Activated B cell treated with CpG ODN at 0.5 μM for 24 hours (primary cell): ENCODE measurements at regions of chr9 and their contacts with region 1.

Region 1: GRCh38 chr9:128322404-128323211 is at the starts of genes COQ4 and TRUB2:
- DNase-seq: peak; percentile 86
- ATAC-seq: peak; percentile 88
- H3K4me3 Mint-ChIP-seq: peak within 1 kb of the TSS; percentile 92
- H3K27ac Mint-ChIP-seq: peak within 1 kb of the TSS; percentile 97
- H3K4me1 Mint-ChIP-seq: peaks cover 19% of the 10 kb centered on the region
- H3K27me3 Mint-ChIP-seq: no peaks in the 10 kb centered on the region
- CTCF ChIP-seq: no peak
- total RNA-seq, gene COQ4: 36.2 and 45.6 TPM in 2 replicates
- total RNA-seq, gene TRUB2: 28.0 and 32.6 TPM in 2 replicates

Region 2: GRCh38 chr9:128191406-128192046 is 131.1 kb before region 1 on chr9 and contains the start of gene CIZ1:
- CTCF ChIA-PET with region 1: no interaction called
- POLR2A ChIA-PET with region 1: no interaction called
- intact Hi-C with region 1: loop called (anchors 5 kb)
- DNase-seq: peak; percentile 85
- ATAC-seq: peak; percentile 89
- H3K4me3 Mint-ChIP-seq: peak within 1 kb of the TSS; percentile 94
- H3K27ac Mint-ChIP-seq: peak within 1 kb of the TSS; percentile 92
- H3K4me1 Mint-ChIP-seq: peaks cover 25% of the 10 kb centered on the region
- H3K27me3 Mint-ChIP-seq: no peaks in the 10 kb centered on the region
- CTCF ChIP-seq: no peak
- total RNA-seq, gene CIZ1: 142 and 160 TPM in 2 replicates

Region 3: DNA sequence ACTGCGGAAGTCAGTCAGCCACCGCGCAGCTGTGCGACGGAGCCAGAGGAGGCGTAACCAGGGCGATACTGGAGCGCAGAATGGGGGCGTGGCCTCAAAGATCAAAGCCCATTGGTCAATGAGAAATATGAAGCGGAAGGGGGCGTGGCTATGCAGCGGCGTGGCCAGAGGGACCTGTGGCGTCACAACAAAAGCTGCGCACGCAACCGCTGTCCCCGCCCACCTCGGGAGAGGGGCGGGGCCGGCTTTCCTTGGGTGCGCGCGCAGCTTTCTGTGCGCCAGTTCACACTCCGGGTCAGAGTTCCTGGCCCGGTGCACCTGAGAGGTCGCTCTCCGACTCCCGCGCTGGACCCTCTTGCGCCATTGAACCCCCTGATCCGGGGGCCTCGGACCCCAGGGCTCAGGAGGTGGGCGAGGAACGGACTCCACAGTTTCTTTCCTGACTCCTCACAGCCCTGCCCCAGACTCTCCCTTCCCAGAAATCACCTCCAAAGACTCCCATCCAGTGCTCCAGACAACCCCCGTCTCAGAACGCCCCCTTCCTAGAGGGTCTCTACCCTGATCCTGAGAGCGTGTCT is 46.5 kb before region 1 on chr9 and contains the starts of genes GOLGA2 and SWI5:
- CTCF ChIA-PET with region 1: no interaction called
- POLR2A ChIA-PET with region 1: interaction called, 3 read pairs
- intact Hi-C with region 1: loop called (anchors 1 kb)
- DNase-seq: peak; percentile 96
- ATAC-seq: peak; percentile 95
- H3K4me3 Mint-ChIP-seq: peak within 1 kb of the TSS; percentile 97
- H3K27ac Mint-ChIP-seq: peak within 1 kb of the TSS; percentile 92
- H3K4me1 Mint-ChIP-seq: peaks cover 27% of the 10 kb centered on the region
- H3K27me3 Mint-ChIP-seq: no peaks in the 10 kb centered on the region
- CTCF ChIP-seq: no peak
- total RNA-seq, gene GOLGA2: 46.0 and 53.5 TPM in 2 replicates
- total RNA-seq, gene SWI5: 7.2 and 10.4 TPM in 2 replicates

Region 4: GRCh38 chr9:128370826-128371621 is 48.4 kb after region 1 on chr9 and contains the start of gene URM1:
- CTCF ChIA-PET with region 1: no interaction called
- POLR2A ChIA-PET with region 1: interaction called, 8 read pairs
- intact Hi-C with region 1: loop called (anchors 1 kb)
- DNase-seq: peak; percentile 96
- ATAC-seq: peak; percentile 91
- H3K4me3 Mint-ChIP-seq: peak within 1 kb of the TSS; percentile 97
- H3K27ac Mint-ChIP-seq: peak within 1 kb of the TSS; percentile 94
- H3K4me1 Mint-ChIP-seq: peaks cover 31% of the 10 kb centered on the region
- H3K27me3 Mint-ChIP-seq: no peaks in the 10 kb centered on the region
- CTCF ChIP-seq: no peak
- total RNA-seq, gene URM1: 55.8 and 65.1 TPM in 2 replicates

Region 5: GRCh38 chr9:128455849-128456612 is 133.4 kb after region 1 on chr9 and contains the start of gene ODF2:
- CTCF ChIA-PET with region 1: no interaction called
- POLR2A ChIA-PET with region 1: no interaction called
- intact Hi-C with region 1: loop called (anchors 1 kb)
- DNase-seq: peak; percentile 99
- ATAC-seq: peak; percentile 88
- H3K4me3 Mint-ChIP-seq: peak within 1 kb of the TSS; percentile 88
- H3K27ac Mint-ChIP-seq: peak within 1 kb of the TSS; percentile 83
- H3K4me1 Mint-ChIP-seq: peaks cover 14% of the 10 kb centered on the region
- H3K27me3 Mint-ChIP-seq: no peaks in the 10 kb centered on the region
- CTCF ChIP-seq: no peak
- total RNA-seq, gene ODF2: 41.2 and 45.7 TPM in 2 replicates

Region 6: GRCh38 chr9:128656416-128657343 is 334.1 kb after region 1 on chr9 and contains the start of gene DYNC2I2:
- CTCF ChIA-PET with region 1: no interaction called
- POLR2A ChIA-PET with region 1: no interaction called
- intact Hi-C with region 1: loop called (anchors 1 kb)
- DNase-seq: peak; percentile 80
- ATAC-seq: peak; percentile 73
- H3K4me3 Mint-ChIP-seq: peak within 1 kb of the TSS; percentile 92
- H3K27ac Mint-ChIP-seq: peak within 1 kb of the TSS; percentile 99
- H3K4me1 Mint-ChIP-seq: peaks cover 18% of the 10 kb centered on the region
- H3K27me3 Mint-ChIP-seq: no peaks in the 10 kb centered on the region
- CTCF ChIP-seq: no peak
- total RNA-seq, gene DYNC2I2: 58.0 and 60.2 TPM in 2 replicates

Region 7: GRCh38 chr9:128786681-128787601 is 464.3 kb after region 1 on chr9 and contains the start of gene TBC1D13:
- CTCF ChIA-PET with region 1: no interaction called
- POLR2A ChIA-PET with region 1: no interaction called
- intact Hi-C with region 1: loop called (anchors 1 kb)
- DNase-seq: peak; percentile 96
- ATAC-seq: peak; percentile 95
- H3K4me3 Mint-ChIP-seq: peak within 1 kb of the TSS; percentile 95
- H3K27ac Mint-ChIP-seq: peak within 1 kb of the TSS; percentile 85
- H3K4me1 Mint-ChIP-seq: peaks cover 17% of the 10 kb centered on the region
- H3K27me3 Mint-ChIP-seq: no peaks in the 10 kb centered on the region
- CTCF ChIP-seq: no peak
- total RNA-seq, gene TBC1D13: 21.5 and 26.4 TPM in 2 replicates